AG04449 (cell line): ENCODE measurements at regions of chr11 and their contacts with region 1.

Region 1: DNA sequence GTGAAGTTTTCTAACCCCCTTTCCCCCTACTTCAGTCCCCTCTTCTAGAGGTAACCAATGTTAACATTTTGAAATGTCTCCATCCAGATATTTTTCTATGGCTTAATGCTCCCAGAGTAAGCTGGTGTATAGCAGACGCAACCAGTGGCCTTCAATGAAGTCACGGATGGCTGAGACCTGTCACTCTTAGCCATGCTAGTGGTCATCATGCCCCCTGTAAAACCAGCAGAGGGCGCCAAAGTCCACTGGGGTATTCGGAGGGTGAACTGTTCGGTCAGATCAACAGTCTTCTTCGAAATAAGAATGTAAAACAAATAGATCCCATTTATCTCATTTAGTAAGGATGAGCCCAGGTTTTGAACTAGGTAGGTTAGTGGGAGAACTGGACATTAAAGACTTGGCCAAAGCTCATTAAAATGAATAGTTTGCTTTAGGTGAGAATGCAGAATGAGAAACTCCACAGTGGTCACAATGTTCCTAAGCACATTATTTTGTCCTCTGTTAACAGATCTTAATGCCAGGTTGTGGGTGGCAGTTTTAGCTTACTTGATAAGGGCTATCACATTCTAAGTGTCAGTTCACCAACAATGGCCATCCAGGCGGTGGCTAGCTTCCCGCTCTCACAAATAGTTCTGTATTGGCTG is 8.6 kb upstream of the MMP8 start:
- DNase-seq: no peak
- H3K4me3 ChIP-seq: no peak overlapping the region
- CTCF ChIP-seq: peak; percentile 74

Region 2: DNA sequence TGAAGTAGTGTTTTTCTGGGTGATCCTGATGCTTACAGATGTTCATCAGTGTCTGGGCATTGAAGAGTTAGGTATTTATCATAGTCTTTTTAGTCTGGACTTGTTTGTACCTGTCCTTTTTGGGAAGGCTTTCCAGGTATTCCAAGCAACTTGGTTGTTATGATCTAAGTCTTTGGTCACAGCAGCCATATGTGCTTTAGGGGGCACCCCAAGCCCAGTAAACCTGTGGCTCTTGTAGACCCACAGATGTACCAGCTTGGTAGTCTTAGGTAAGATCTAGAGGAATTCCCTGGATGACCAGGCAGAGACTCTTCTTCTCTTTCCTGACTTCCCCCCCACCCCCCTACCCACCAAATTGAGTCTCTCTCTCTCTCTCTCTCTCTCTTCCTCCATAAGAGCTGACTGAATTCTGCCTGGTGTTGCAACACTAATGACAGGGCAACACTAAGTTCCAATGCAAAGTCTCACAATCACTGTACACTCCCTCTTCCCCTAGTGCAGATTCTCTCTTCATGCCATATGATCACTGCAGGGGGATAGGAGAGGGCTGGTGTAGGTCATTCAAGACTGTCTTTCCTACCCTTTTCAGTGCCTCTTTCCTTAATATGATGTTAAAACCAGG is 15.9 kb after region 1 on chr11:
- CTCF ChIA-PET with region 1: interaction called, 28 read pairs
- POLR2A ChIA-PET with region 1: no interaction called
- DNase-seq: no peak
- H3K4me3 ChIP-seq: no peak overlapping the region
- CTCF ChIP-seq: no peak

Region 3: DNA sequence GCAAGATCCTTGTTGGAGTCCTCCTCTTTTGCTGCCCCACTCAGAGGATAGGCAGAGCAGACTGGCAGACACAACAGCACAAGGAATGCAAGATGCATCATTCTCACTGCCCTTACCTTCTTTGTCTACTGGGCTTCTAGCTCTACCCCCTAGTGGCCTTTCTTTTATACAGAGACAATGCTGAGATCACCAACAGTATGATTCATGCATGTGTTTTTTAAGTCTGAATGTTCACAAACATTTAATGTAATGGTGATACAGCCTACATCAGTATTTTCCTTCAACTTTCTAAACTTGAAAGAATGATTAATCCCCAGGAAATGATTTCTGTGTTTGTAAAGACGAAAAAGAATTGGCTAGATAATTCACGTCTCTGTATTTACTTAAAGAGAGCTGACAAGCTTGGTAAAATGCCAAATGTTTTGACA is 47.2 kb after region 1 on chr11 and contains the start of gene MMP10:
- CTCF ChIA-PET with region 1: interaction called, 17 read pairs
- POLR2A ChIA-PET with region 1: no interaction called
- DNase-seq: no peak
- H3K4me3 ChIP-seq: no peak within 1 kb of the TSS
- CTCF ChIP-seq: peak; percentile 37

Region 4: DNA sequence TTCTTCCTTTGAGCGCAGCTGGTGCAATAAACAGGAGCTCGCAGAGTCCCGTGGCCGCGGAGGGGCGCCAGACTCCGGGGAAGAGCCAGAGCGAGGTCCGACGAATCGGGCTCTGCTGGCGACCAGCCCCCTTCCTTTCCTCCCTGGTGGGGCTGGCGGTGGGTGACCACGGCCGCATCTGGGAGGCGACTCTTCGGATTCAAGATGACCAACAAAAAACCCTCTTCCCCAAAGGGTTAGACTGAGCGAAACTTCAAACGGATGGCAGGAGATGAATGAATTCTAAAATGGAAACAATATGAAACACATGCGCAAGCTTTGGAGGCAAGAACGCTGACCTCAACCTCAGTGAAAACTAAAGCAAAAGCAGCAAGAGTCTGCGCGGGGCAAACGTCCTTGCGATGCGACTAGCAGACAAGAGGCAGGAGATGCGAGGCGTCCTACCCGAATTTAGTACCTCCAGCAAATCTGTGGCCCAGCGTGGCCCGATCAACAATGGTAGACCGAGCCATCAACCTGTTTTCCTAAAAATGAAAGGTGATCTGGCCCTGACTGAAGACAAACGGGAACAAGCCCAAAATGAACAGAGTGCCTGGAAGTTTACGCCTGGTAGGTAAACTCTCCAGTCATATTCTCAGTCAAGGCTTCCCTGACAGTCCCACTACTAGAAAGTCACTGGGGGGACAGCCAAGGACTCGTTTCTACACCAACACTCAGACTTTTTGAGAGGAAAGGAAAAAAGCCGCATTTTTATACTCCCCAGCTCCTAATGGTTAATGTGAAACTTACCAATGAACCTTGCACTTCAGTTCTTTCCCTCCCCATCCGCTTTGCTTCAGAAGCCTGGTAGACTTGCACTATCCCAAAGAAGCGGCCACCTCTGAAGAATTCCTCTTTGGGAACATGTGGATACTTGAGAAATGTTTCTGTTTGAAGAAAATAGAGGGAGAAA is 98.4 kb after region 1 on chr11:
- CTCF ChIA-PET with region 1: interaction called, 12 read pairs
- POLR2A ChIA-PET with region 1: no interaction called
- DNase-seq: no peak
- H3K4me3 ChIP-seq: peak overlapping the region; percentile 52
- CTCF ChIP-seq: peak; percentile 83

Region 5: DNA sequence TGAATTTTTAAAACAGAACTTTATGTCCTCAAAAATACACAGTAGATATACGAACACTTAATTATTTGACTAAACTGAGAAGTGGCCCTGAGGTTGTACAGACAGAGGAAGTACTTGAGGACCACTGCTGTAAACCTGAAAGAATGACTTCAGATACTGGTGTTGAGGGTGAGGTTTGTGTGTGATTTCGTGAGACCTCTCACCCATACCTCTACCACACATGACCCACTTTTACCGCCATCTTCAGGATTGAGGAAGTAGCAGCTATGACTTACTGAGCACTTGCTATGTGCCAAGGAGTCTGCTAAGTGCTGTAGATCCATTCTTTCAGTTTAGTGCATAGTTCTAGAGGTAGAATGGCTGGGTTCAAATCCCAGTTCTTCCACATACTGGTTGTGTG is 200.3 kb after region 1 on chr11:
- CTCF ChIA-PET with region 1: interaction called, 11 read pairs
- POLR2A ChIA-PET with region 1: no interaction called
- DNase-seq: no peak
- H3K4me3 ChIP-seq: no peak overlapping the region
- CTCF ChIP-seq: no peak